ENCODE measurements at regions of chr6 and their contacts with region 1.

Region 1: GRCh38 chr6:47631269-47631772 is 67.1 kb upstream of the ADGRF4 start:
- DNase-seq: peak; percentile 11 to 60
- H3K4me3 ChIP-seq: no peak overlapping the region
- H3K4me1 ChIP-seq: no peaks in the 10 kb centered on the region
- H3K27me3 ChIP-seq: no peaks in the 10 kb centered on the region

Region 2: GRCh38 chr6:47769982-47770381 is 138.7 kb after region 1 on chr6:
- in situ Hi-C with region 1: loop called (anchors 10 kb)
- DNase-seq: no peak
- H3K4me3 ChIP-seq: no peak overlapping the region
- H3K4me1 ChIP-seq: no peaks in the 10 kb centered on the region
- H3K27me3 ChIP-seq: 0 out of 2 replicates have a peak, but pooled peaks cover 3% of the 10 kb centered on the region

Measured in HAP-1 (cell line).